H1 (cell line): ENCODE measurements at regions of chr5 and their contacts with region 1.

Region 1: GRCh38 chr5:147628058-147628895 is 118.4 kb upstream of the DPYSL3 start:
- DNase-seq: peak; percentile 25 to 82
- H3K4me3 ChIP-seq: no peak overlapping the region
- H3K27ac ChIP-seq: no peak overlapping the region
- H3K4me1 ChIP-seq: no peaks in the 10 kb centered on the region; a peak in 1 of 7 replicates
- H3K27me3 ChIP-seq: no peaks in the 10 kb centered on the region
- CTCF ChIP-seq: peak in 2 of 3 experiments; percentile 77 to 88; a peak in 3 of 4 replicates
- EP300 ChIP-seq: no peak
- POLR2A ChIP-seq: no peak
- RAD21 ChIP-seq: peak; percentile 86 to 93

Region 2: DNA sequence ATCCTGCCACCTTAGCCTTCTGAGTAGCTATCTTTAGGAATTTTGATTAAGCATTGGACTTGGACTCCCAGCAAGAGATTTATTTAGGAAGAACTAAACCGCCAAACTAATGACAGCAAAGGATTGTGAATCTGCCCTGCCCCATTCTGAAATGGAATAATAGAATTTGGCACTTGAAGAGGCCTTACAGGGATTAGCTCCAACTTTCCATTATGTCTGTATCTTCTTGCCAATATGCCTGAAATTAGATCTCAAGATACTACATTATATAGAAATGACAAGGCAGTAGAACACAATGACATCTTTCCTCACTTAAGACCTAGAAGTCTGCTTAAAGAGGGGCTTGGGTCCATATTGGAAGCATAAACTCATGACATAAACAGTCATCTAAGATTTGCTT is 41.4 kb before region 1 on chr5:
- CTCF ChIA-PET with region 1: no interaction called
- POLR2A ChIA-PET with region 1: no interaction called
- DNase-seq: no peak
- H3K4me3 ChIP-seq: no peak overlapping the region
- H3K27ac ChIP-seq: no peak overlapping the region
- H3K4me1 ChIP-seq: peaks cover 0 to 1% (median 0%) of the 10 kb centered on the region in 4 experiments; a peak in 1 of 7 replicates
- H3K27me3 ChIP-seq: no peaks in the 10 kb centered on the region
- CTCF ChIP-seq: no peak
- EP300 ChIP-seq: no peak
- POLR2A ChIP-seq: no peak
- RAD21 ChIP-seq: no peak

Region 3: GRCh38 chr5:147671365-147671764 is 43.1 kb after region 1 on chr5:
- CTCF ChIA-PET with region 1: interaction called, 14 read pairs
- POLR2A ChIA-PET with region 1: interaction called, 3 read pairs
- DNase-seq: no peak
- H3K4me3 ChIP-seq: no peak overlapping the region
- H3K27ac ChIP-seq: no peak overlapping the region
- H3K4me1 ChIP-seq: no peaks in the 10 kb centered on the region
- H3K27me3 ChIP-seq: no peaks in the 10 kb centered on the region
- CTCF ChIP-seq: no peak
- EP300 ChIP-seq: no peak
- POLR2A ChIP-seq: no peak
- RAD21 ChIP-seq: no peak